A549 (cell line): ENCODE measurements at regions of chr17 and their contacts with region 1.

Region 1: DNA sequence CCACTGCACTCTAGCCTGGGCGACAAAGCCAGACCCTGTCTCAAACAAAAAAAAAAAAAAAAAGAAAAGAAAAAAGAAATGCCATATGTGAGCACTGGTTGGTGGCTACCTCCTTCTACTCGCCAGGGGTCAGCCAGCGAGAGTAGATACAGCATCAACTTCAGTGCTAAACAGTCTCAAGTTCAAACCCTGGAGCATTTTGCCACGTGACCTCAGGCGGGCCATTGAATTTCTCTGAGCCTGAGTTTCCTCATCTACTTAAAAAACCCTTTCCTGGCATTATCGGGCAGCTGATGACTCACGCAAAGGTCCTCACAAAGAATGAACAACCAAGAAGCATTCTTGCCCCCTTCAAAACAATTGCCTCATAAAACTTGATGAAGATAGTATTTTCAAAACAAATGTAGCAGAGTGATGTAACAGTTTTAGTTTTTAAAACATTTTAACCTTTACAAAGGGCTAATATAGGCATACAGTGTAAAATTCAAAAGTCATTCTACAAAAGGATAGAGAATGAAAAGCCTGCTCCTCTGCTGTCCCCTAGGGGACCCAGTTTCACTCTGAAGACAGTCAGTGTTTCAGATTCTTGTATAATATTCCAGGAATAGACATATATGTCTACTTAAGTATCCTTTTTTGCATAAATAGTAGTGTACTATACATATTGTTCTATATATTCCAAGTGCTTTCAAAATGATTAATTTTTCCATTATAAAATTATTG is 28.4 kb downstream of the DNAH2 start:
- DNase-seq: peak; percentile 70 to 75
- ATAC-seq: peak; percentile 55 to 65; a peak in 5 of 6 replicates
- H3K4me3 ChIP-seq: no peak overlapping the region
- H3K27ac ChIP-seq: peak overlapping the region in 1 of 2 experiments; percentile 24; a peak in 3 of 6 replicates
- H3K4me1 ChIP-seq: peaks cover 12% of the 10 kb centered on the region
- CTCF ChIP-seq: peak; percentile 13; the same call in 1 of the 3 replicates
- EP300 ChIP-seq: no peak
- POLR2A ChIP-seq: no peak
- RAD21 ChIP-seq: no peak

Region 2: GRCh38 chr17:7579001-7579808 is 166.7 kb before region 1 on chr17 and contains the start of gene CD68:
- CTCF ChIA-PET with region 1: no interaction called
- POLR2A ChIA-PET with region 1: no interaction called
- DNase-seq: peak; percentile 88 to 97
- ATAC-seq: peak; percentile 59 to 73
- H3K4me3 ChIP-seq: no peak within 1 kb of the TSS
- H3K27ac ChIP-seq: peak within 1 kb of the TSS; percentile 64 to 79
- H3K4me1 ChIP-seq: peaks cover 80% of the 10 kb centered on the region
- CTCF ChIP-seq: no peak
- EP300 ChIP-seq: 0 out of 5 replicates have a peak, but pooled peaks of 1 of the 2 experiments have one; percentile 32
- POLR2A ChIP-seq: no peak
- RAD21 ChIP-seq: no peak; a peak in 1 of 5 replicates
- polyA plus RNA-seq, gene CD68: 14.9 and 17.7 TPM in 2 replicates

Region 3: DNA sequence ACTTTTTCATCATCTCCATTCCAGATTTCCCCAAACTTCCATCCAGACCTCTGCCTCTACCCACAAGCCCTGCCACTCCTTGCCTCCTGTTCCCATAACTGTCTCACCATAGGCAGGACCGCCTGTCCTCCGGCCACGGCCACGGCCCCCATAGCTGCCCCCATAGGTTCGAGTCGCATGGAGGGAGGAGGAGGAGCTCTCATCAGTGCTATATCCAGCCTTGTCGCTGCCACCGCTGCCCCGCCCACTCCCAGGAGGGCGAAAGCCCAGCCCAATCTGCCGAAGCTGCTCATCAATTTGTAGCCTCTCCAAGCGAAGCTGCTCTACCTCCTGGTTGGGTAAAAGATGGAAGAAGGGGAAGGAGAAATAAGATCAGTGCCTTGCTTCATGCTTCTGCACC is 152.6 kb before region 1 on chr17:
- CTCF ChIA-PET with region 1: no interaction called
- POLR2A ChIA-PET with region 1: no interaction called
- DNase-seq: no peak
- ATAC-seq: no peak
- H3K4me3 ChIP-seq: no peak overlapping the region
- H3K27ac ChIP-seq: no peak overlapping the region
- H3K4me1 ChIP-seq: peaks cover 24% of the 10 kb centered on the region
- CTCF ChIP-seq: no peak
- EP300 ChIP-seq: no peak
- POLR2A ChIP-seq: no peak
- RAD21 ChIP-seq: no peak

Region 4: DNA sequence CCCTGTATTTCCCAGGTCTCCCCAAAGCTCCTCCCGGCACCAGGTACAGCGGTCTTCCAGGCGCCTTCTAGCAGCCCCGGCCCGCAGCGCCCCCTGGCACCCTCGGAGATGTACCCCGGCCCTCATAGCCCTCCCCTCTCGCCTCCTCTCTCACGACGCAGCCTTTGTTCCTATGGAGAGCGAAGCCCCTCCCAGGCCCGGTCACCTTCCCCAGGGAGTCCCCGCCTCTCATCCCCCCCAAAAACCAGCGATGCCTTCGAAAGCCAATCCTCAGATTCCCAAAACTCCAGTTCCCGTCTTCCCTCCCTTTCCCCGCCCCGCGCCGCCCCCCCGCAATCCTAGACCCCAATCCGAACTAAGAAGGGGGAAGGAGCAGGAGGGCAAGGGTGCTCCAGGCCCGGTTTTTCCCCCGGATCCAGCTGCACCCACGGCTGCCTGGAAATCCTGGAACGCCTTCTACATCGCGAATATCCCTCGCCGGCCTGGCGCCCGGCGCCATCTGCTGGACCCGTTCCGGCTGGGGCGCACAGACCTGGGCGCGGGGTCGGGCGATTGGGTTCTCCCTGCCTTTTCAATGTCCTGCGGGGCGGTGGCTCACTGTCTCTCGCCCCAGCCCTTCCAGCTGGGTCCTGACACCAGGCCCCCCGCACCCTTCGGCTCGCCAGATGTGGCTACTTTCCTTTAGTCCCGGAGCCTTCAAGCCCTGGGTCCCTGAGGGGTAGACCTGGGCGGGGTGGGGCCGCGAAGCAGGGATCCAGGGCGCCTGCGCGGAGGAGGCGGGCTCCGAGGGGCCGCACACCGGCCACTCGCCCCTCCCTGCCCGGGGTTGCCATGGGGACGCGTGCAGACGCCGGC is 28.8 kb before region 1 on chr17 and contains the start of gene DNAH2:
- CTCF ChIA-PET with region 1: interaction called, 17 read pairs
- POLR2A ChIA-PET with region 1: no interaction called
- DNase-seq: peak; percentile 93 to 94
- ATAC-seq: peak; percentile 85 to 94
- H3K4me3 ChIP-seq: peak within 1 kb of the TSS; percentile 52
- H3K27ac ChIP-seq: peak within 1 kb of the TSS; percentile 79 to 89
- H3K4me1 ChIP-seq: peaks cover 21% of the 10 kb centered on the region
- CTCF ChIP-seq: peak; percentile 78
- EP300 ChIP-seq: no peak
- POLR2A ChIP-seq: peak; percentile 62
- RAD21 ChIP-seq: peak; percentile 68 to 75
- polyA plus RNA-seq, gene DNAH2: 0.08 TPM in 2 replicates

Region 5: GRCh38 chr17:7792611-7793010 is 46.7 kb after region 1 on chr17:
- CTCF ChIA-PET with region 1: interaction called, 30 read pairs
- POLR2A ChIA-PET with region 1: no interaction called
- DNase-seq: no peak
- ATAC-seq: no peak
- H3K4me3 ChIP-seq: no peak overlapping the region
- H3K27ac ChIP-seq: no peak overlapping the region
- H3K4me1 ChIP-seq: no peaks in the 10 kb centered on the region
- CTCF ChIP-seq: no peak
- EP300 ChIP-seq: no peak
- POLR2A ChIP-seq: no peak
- RAD21 ChIP-seq: no peak

Region 6: GRCh38 chr17:7825206-7825990 is 79.5 kb after region 1 on chr17:
- CTCF ChIA-PET with region 1: interaction called, 65 read pairs
- POLR2A ChIA-PET with region 1: no interaction called
- DNase-seq: peak; percentile 47 to 67
- ATAC-seq: peak; percentile 70 to 78
- H3K4me3 ChIP-seq: no peak overlapping the region
- H3K27ac ChIP-seq: no peak overlapping the region
- H3K4me1 ChIP-seq: no peaks in the 10 kb centered on the region; the same call in 2 of the 3 replicates
- CTCF ChIP-seq: no peak
- EP300 ChIP-seq: no peak
- POLR2A ChIP-seq: no peak
- RAD21 ChIP-seq: no peak

Region 7: DNA sequence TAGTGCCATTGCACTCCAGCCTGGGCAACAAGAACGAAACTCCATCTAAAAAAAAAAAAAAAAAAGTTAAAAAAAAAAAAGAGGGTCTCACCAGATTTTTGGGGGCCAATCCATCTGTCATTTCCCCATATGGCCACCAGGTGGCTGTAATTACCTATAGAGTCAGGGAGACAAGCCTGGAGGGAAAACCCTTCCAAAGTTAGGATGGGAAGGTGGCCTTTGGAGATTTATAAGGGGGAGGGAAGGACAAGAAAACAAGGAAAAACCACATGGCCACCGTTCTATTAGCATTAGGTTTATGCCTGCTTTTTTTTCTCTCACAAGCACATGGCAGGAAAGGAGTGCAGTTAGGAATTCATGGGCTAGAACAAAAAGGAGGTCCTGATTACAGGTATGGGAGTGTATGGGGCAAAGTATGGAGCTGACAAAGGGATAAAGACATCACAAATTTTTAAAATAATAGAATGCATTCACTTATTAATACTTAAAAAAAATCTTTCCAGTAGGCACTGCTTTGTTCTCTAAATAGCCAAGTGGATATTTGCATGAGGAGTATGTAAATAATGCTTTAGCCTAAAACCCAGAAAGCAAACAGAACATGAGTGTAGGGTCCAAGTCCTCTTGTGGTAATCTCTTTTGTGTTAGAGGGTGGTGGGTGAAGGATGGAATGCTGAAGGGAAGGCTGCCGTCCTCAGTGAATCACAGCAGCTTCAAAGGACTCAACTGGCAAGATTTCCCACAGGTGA is 117.0 kb after region 1 on chr17:
- CTCF ChIA-PET with region 1: interaction called, 23 read pairs
- POLR2A ChIA-PET with region 1: interaction called, 3 read pairs
- DNase-seq: peak; percentile 65 to 66
- ATAC-seq: no peak
- H3K4me3 ChIP-seq: no peak overlapping the region
- H3K27ac ChIP-seq: no peak overlapping the region
- H3K4me1 ChIP-seq: peaks cover 15% of the 10 kb centered on the region
- CTCF ChIP-seq: peak; percentile 96
- EP300 ChIP-seq: no peak
- POLR2A ChIP-seq: no peak
- RAD21 ChIP-seq: peak; percentile 94 to 97

Region 8: DNA sequence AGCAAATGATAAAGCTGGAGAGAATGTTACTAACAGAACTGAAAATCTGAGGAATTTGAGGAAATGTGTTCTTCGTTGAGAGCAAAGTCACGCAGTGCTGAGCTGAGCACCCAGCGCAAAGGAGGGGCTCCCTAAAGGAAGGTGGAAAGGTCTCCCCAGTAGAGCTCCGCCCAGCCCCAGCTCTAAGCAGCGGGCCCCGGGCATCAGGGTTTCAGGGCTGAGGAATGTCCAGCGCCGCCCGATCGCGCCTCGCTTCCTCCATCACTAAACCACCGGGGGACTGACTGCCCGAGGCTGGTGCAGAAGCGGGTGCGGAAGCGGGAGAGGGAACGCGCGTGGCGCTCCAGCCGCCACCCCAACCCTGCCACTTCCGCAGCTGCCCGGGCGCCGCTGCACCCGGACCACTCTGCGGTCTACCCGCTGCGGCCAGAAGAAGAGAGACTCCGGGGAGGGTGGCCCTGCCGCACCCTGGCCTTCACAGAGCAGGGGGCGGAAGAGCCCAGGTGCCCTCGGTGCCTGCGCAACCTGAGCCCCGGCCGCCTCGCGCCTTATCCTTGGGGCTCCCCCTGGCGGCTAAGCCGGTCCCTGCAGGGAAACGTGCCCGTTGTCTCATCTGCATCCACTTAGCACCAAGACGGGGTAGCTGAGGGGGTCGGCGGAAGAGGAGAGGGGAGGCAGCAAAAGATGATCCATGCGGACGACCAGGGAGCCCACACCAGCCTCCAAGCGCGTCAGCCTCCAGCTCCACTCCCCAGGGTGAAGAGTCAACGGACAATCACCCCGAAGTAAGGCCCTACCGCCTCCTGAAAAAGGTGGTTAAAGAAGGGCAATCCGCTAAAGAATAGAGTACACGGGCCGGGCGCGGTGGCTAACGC is 244.1 kb after region 1 on chr17:
- CTCF ChIA-PET with region 1: interaction called, 24 read pairs
- POLR2A ChIA-PET with region 1: no interaction called
- DNase-seq: peak; percentile 88 to 97
- ATAC-seq: peak; percentile 90 to 93
- H3K4me3 ChIP-seq: peak overlapping the region; percentile 58
- H3K27ac ChIP-seq: peak overlapping the region; percentile 83 to 93
- H3K4me1 ChIP-seq: no peaks in the 10 kb centered on the region
- CTCF ChIP-seq: peak; percentile 97
- EP300 ChIP-seq: no peak
- POLR2A ChIP-seq: peak; percentile 76
- RAD21 ChIP-seq: peak; percentile 70 to 76